CD14-positive monocyte (primary cell): ENCODE measurements at regions of chr9 and their contacts with region 1.

Region 1: GRCh38 chr9:69672596-69673310 is 582 bp upstream of the APBA1 start:
- DNase-seq: peak; percentile 62 to 67 (median 66)
- H3K4me3 ChIP-seq: peak overlapping the region; percentile 78 to 92 (median 84)
- H3K4me3 Mint-ChIP-seq: peak overlapping the region; percentile 86 to 88
- H3K27ac ChIP-seq: no peak overlapping the region
- H3K27ac Mint-ChIP-seq: peak overlapping the region in 2 of 7 donors; percentile 21 to 34
- H3K4me1 ChIP-seq: peaks cover 14 to 21% of the 10 kb centered on the region in 2 donors
- H3K4me1 Mint-ChIP-seq: peaks cover 18% of the 10 kb centered on the region
- H3K27me3 ChIP-seq: peaks cover 0 to 22% of the 10 kb centered on the region in 2 donors
- H3K27me3 Mint-ChIP-seq: peaks cover 26 to 32% (median 28%) of the 10 kb centered on the region in 3 donors
- CTCF ChIP-seq: peak; percentile 92

Region 2: GRCh38 chr9:69433392-69433791 is 239.4 kb before region 1 on chr9:
- intact Hi-C with region 1: no loop called
- DNase-seq: no peak
- H3K4me3 ChIP-seq: no peak overlapping the region
- H3K4me3 Mint-ChIP-seq: no peak overlapping the region
- H3K27ac ChIP-seq: no peak overlapping the region
- H3K27ac Mint-ChIP-seq: no peak overlapping the region
- H3K4me1 ChIP-seq: no peaks in the 10 kb centered on the region
- H3K4me1 Mint-ChIP-seq: no peaks in the 10 kb centered on the region
- H3K27me3 ChIP-seq: no peaks in the 10 kb centered on the region
- H3K27me3 Mint-ChIP-seq: peaks cover 0 to 1% (median 1%) of the 10 kb centered on the region in 3 donors
- CTCF ChIP-seq: no peak

Region 3: GRCh38 chr9:69877854-69878514 is 205.2 kb after region 1 on chr9:
- intact Hi-C with region 1: loop called in 1 of 2 experiments (anchors 10 kb)
- DNase-seq: peak in 1 of 3 donors; percentile 4
- H3K4me3 ChIP-seq: no peak overlapping the region
- H3K4me3 Mint-ChIP-seq: no peak overlapping the region
- H3K27ac ChIP-seq: no peak overlapping the region
- H3K27ac Mint-ChIP-seq: no peak overlapping the region
- H3K4me1 ChIP-seq: no peaks in the 10 kb centered on the region
- H3K4me1 Mint-ChIP-seq: peaks cover 10% of the 10 kb centered on the region
- H3K27me3 ChIP-seq: no peaks in the 10 kb centered on the region
- H3K27me3 Mint-ChIP-seq: peaks cover 5% of the 10 kb centered on the region in 3 donors
- CTCF ChIP-seq: peak; percentile 59